AG04449 (cell line): ENCODE measurements at regions of chr3 and their contacts with region 1.

Region 1: DNA sequence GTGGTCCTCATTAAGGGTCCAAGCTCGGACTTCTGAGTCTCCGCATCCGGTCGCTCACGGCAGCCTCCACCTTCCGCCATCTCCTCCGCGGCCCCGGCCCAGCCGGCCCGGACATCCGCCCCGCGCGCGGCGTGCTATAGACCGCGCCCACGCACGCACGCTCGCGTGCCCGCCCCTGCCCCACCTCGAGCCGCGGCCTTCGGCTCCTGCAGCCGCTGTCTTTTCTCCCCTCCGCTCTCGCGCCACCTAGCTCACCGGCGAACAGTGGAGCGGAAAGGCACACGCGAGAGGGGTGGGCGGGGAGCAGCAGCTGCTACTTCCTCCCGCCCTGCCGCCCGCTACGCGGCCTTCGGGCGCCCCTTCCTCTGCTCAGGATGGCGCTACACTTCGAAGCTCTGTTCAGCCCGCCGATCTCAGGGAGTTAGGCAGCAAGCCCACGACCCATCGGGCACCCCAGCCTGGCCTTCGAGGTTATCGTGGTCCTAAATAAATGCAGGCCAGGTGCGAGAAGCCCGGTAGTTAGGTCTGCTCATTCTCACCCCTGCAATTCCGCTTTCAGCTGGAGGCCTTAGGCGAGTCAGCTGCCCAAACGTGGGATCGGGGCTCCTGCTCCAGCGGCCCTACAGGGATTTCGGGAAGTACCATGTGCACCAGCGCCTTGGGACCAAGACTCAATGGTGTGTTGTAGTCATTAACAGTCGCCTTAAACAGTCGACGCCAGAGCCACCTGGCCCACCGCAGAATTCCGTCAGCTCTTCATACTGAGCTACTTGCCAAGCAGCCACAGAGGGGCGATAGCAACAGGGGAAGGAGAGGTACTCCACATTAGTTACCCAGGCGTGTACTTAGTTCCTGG is at the start of gene USP4:
- DNase-seq: no peak
- H3K4me3 ChIP-seq: peak within 1 kb of the TSS; percentile 84
- CTCF ChIP-seq: peak; percentile 68

Region 2: DNA sequence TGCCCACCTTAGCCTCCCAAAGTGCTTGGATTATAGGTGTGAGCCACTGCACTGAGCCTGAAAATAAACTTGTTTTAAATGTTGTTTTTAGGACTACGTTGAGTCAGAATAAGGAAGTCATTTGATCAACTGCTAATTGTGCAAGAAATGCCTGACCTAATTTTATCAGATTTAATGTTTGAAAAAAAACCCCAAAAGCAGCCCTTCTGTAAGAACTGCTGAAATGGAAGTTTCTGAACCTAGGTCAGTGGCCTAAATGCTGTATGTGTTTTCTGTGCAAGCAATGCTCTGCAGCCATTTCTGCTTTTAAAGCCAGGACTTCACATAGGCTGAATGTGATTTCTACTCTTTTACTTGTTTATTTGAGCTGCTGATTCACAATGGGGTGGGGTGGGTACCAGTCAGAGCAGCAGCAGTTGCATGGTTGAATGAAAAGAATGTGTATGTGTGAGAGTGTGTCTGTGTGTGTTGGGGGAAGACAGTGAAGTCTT is 11.4 kb after region 1 on chr3:
- CTCF ChIA-PET with region 1: interaction called, 20 read pairs
- POLR2A ChIA-PET with region 1: interaction called, 12 read pairs
- DNase-seq: peak; percentile 77
- H3K4me3 ChIP-seq: no peak overlapping the region
- CTCF ChIP-seq: no peak

Region 3: DNA sequence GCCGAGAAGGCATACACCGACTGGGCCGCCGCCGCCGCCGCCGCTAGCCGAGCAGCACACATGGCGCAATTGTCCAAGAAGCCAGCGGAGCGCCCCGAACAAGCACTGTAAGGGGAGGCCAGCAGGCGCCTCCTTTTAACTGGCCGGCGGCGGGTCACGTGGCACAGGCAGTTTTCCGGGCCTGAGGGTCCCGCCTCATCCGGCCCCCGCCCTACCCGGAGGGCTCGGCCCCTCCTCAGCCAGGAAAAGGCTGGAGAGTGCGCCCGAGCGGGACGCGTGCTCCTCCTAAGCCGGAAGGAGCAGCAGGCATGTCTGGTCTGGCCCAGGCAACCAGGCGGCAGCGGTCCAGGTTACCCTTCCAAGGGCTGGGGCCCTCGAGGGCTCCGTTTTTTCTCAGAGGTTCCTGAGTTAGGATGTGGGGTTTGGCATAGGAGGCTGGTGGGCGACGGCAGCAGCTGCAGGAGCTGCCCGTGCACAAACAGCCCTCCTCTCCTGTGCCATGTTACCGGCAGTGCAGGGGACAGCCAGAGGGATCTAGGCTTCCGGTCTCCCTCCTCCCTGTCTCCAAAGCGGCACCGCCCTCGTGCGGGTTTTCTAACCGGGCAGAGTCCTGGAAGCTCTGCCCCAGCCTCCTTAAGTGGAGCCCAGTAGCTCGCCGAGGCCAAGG is 18.2 kb after region 1 on chr3 and contains the start of gene GPX1:
- CTCF ChIA-PET with region 1: interaction called, 20 read pairs
- POLR2A ChIA-PET with region 1: interaction called, 10 read pairs
- DNase-seq: peak; percentile 64
- H3K4me3 ChIP-seq: peak within 1 kb of the TSS; percentile 71
- CTCF ChIP-seq: no peak

Region 4: DNA sequence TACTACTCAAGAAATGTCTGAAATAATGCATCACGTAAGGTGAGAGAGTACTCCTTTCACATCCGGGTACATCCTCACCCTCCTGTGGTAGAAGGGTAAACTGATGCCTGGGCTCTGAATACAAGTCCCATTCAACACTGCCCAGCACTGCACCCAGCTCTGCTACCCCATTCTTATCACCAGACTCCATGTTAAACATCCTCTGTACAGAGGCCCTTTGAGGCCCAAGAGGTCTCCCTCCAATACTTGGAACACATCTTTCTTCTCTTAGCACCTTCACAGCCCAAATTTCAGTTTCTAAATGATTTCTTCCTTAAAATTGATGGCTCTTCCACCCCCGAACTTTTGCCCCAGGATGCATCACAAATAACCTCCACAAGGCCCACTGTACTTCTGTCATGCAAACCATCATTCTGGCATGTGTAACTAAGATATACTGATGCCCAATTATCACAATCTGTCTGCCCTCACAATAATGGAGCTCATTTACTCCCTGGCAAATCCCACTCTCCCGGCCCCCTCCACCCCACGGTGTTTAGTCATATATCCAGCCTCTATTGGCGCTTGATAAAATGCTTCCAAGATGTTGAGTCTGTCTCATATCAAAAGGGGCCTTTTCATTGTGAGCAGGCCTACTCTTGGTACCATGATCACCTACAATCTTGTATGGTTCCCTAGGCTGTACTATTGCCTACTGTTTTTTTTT is 30.6 kb after region 1 on chr3:
- CTCF ChIA-PET with region 1: no interaction called
- POLR2A ChIA-PET with region 1: no interaction called
- DNase-seq: no peak
- H3K4me3 ChIP-seq: no peak overlapping the region
- CTCF ChIP-seq: no peak

Region 5: GRCh38 chr3:49411968-49412631 is 71.9 kb after region 1 on chr3 and contains the starts of genes RHOA and TCTA:
- CTCF ChIA-PET with region 1: interaction called, 6 read pairs
- POLR2A ChIA-PET with region 1: interaction called, 22 read pairs
- DNase-seq: peak; percentile 99
- H3K4me3 ChIP-seq: peak within 1 kb of the TSS; percentile 96
- CTCF ChIP-seq: no peak

Region 6: GRCh38 chr3:49428697-49429100 is 88.5 kb after region 1 on chr3:
- CTCF ChIA-PET with region 1: interaction called, 11 read pairs
- POLR2A ChIA-PET with region 1: no interaction called
- DNase-seq: no peak
- H3K4me3 ChIP-seq: peak overlapping the region; percentile 81
- CTCF ChIP-seq: no peak

Region 7: GRCh38 chr3:49445381-49445780 is 105.2 kb after region 1 on chr3:
- CTCF ChIA-PET with region 1: interaction called, 88 read pairs
- POLR2A ChIA-PET with region 1: interaction called, 7 read pairs
- DNase-seq: no peak
- H3K4me3 ChIP-seq: no peak overlapping the region
- CTCF ChIP-seq: no peak

Region 8: GRCh38 chr3:49454458-49454857 is 114.3 kb after region 1 on chr3:
- CTCF ChIA-PET with region 1: interaction called, 88 read pairs
- POLR2A ChIA-PET with region 1: no interaction called
- DNase-seq: no peak
- H3K4me3 ChIP-seq: no peak overlapping the region
- CTCF ChIP-seq: no peak